ENCODE measurements at regions of chr6 and their contacts with region 1.

Region 1: GRCh38 chr6:3721810-3722626 is 29.5 kb downstream of the PXDC1 start:
- DNase-seq: no peak
- ATAC-seq: no peak
- H3K4me3 ChIP-seq: no peak overlapping the region
- H3K27ac ChIP-seq: no peak overlapping the region
- H3K4me1 ChIP-seq: peaks cover 0 to 3% of the 10 kb centered on the region in 2 donors
- H3K27me3 ChIP-seq: no peaks in the 10 kb centered on the region

Region 2: GRCh38 chr6:3456755-3457466 is 265.1 kb before region 1 on chr6 and contains the start of gene SLC22A23:
- intact Hi-C with region 1: loop called in 1 of 2 experiments (anchors 10 kb)
- DNase-seq: peak; percentile 58 to 87
- ATAC-seq: peak; percentile 87
- H3K4me3 ChIP-seq: peak within 1 kb of the TSS; percentile 62 to 88
- H3K27ac ChIP-seq: no peak within 1 kb of the TSS
- H3K4me1 ChIP-seq: peaks cover 0 to 1% of the 10 kb centered on the region in 2 donors
- H3K27me3 ChIP-seq: no peaks in the 10 kb centered on the region
- total RNA-seq, gene SLC22A23: 6.0 to 9.4 TPM